Right ventricle myocardium inferior (tissue), 1 donor: ENCODE measurements at regions of chr2 and their contacts with region 1.

Region 1: DNA sequence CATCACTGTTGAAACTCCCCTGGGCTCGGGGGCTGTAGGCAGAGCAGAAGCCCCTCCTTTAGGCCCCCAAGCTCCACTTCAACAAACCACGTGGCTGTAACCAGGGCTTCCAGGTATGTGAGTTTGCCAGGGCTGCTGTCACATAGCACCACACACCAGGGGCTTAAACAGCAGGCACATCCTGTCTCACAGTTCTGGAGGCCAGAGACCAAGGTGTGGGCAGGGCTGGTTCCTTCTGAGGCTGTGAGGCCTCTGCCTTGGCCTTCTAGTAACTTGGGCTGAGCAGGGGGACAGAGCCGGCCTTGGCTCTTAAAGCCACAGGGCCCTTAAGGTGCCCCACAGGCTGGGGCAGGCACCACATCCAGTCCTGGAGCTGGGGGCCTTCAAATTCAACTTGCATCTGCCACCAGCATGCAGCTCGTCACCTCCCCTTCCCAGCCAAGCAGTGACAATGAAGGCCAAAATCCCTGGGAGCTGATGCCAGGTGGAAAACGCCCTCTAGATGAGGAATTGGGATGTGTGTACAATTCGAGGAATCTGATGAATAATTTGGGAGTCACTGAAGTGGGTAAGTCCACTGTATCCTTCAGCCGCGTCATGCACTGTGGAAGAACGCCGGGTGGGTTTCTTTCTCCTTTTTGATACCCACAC is 104.2 kb upstream of the ODC1 start:
- DNase-seq: no peak
- ATAC-seq: no peak

Region 2: DNA sequence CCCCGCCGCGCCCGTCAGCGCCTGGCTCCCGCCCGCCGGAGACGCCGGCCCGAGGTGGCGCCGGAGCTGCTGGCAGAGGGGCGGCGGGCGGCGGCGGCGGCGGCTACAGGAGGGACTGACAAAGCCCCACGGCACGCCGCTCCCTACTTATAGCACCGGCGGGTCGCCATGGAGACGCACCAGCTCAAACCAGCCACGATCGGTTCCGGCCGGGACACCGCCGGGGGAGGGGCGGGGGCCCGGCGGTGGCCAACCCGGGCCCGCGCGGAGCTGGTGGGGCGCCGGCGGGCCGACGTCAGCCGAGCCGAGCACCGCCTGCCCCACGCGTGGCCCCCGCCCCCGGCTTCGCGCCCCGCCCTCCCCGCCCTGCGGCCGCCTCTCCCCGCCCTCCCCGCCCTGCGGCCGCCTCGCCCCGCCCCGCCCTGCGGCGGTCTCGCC is 104.1 kb before region 1 on chr2 and contains the start of gene ODC1:
- intact Hi-C with region 1: loop called (anchors 2 kb)
- DNase-seq: peak; percentile 98
- ATAC-seq: peak; percentile 94
- total RNA-seq, gene ODC1: 37.2 TPM

Region 3: GRCh38 chr2:10575609-10576280 is 23.4 kb after region 1 on chr2:
- intact Hi-C with region 1: no loop called
- DNase-seq: no peak
- ATAC-seq: no peak

Region 4: DNA sequence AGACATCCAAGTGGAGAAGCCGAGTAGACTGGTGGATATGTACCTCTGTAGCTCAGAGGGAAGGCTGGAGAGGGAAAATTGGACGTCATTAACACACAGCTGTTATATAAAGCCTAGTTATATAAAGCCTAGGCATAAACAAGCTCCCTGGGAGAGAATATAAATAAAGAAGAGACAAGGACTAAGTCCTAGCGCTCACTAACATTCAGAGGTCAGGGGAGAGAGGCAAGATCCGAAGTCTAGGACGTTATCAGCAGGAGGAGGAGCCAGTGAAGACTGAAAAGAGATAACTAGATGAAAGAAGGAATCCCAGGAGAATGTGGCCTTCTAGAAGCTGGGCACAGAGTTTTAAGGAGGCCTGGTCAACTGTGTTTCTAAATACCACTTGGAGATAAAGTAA is 82.2 kb after region 1 on chr2:
- intact Hi-C with region 1: no loop called
- DNase-seq: no peak
- ATAC-seq: peak; percentile 39